HepG2 (cell line): ENCODE measurements at regions of chr17 and their contacts with region 1.

Region 1: GRCh38 chr17:66211047-66211799 is 18.0 kb downstream of the APOH start:
- DNase-seq: no peak
- ATAC-seq: no peak
- H3K4me3 ChIP-seq: no peak overlapping the region
- H3K27ac ChIP-seq: no peak overlapping the region
- H3K4me1 ChIP-seq: peaks cover 19% of the 10 kb centered on the region
- H3K27me3 ChIP-seq: no peaks in the 10 kb centered on the region
- CTCF ChIP-seq: no peak
- EP300 ChIP-seq: no peak
- POLR2A ChIP-seq: peak; percentile 33 to 60; a peak in 2 of 4 replicates
- RAD21 ChIP-seq: no peak

Region 2: GRCh38 chr17:66222798-66223350 is 11.7 kb after region 1 on chr17:
- CTCF ChIA-PET with region 1: no interaction called
- POLR2A ChIA-PET with region 1: interaction called, 10 read pairs
- in situ Hi-C with region 1: no loop called
- intact Hi-C with region 1: no loop called
- DNase-seq: no peak
- ATAC-seq: no peak
- H3K4me3 ChIP-seq: no peak overlapping the region
- H3K27ac ChIP-seq: no peak overlapping the region
- H3K4me1 ChIP-seq: peaks cover 79% of the 10 kb centered on the region
- H3K27me3 ChIP-seq: no peaks in the 10 kb centered on the region; a peak in 1 of 5 replicates
- CTCF ChIP-seq: no peak
- EP300 ChIP-seq: no peak
- POLR2A ChIP-seq: peak in 1 of 2 experiments; percentile 40; a peak in 1 of 4 replicates
- RAD21 ChIP-seq: no peak

Region 3: GRCh38 chr17:66240630-66241029 is 29.4 kb after region 1 on chr17:
- CTCF ChIA-PET with region 1: no interaction called
- POLR2A ChIA-PET with region 1: no interaction called
- in situ Hi-C with region 1: no loop called
- intact Hi-C with region 1: no loop called
- DNase-seq: no peak
- ATAC-seq: no peak
- H3K4me3 ChIP-seq: no peak overlapping the region
- H3K27ac ChIP-seq: no peak overlapping the region
- H3K4me1 ChIP-seq: peaks cover 34% of the 10 kb centered on the region
- H3K27me3 ChIP-seq: no peaks in the 10 kb centered on the region
- CTCF ChIP-seq: no peak
- EP300 ChIP-seq: no peak
- POLR2A ChIP-seq: no peak
- RAD21 ChIP-seq: no peak

Region 4: DNA sequence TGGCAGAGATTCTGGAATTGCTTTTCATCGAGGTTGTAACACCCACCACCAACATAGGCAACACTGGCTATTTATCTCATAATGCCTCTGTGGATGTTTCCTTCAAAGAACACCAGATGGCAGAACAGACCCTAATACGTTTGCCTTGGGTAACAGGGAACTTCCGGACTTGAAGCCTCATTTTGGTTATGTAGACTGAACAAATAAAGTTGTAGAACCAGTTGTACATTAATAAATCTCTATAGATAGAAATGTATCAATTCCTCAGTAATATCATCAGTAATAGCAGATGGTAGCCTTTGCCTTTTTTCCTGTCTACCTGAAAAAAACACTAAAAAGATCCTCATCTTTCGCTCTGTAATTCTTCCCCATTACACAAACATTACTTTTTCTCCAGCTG is 43.9 kb after region 1 on chr17:
- CTCF ChIA-PET with region 1: no interaction called
- POLR2A ChIA-PET with region 1: no interaction called
- in situ Hi-C with region 1: no loop called
- intact Hi-C with region 1: no loop called
- DNase-seq: peak; percentile 87
- ATAC-seq: peak; percentile 92
- H3K4me3 ChIP-seq: no peak overlapping the region
- H3K27ac ChIP-seq: no peak overlapping the region
- H3K4me1 ChIP-seq: peaks cover 5% of the 10 kb centered on the region; the same call in 1 of the 2 replicates
- H3K27me3 ChIP-seq: no peaks in the 10 kb centered on the region
- CTCF ChIP-seq: peak; percentile 93
- EP300 ChIP-seq: no peak
- POLR2A ChIP-seq: no peak
- RAD21 ChIP-seq: peak; percentile 92

Region 5: GRCh38 chr17:66290101-66290722 is 79.0 kb after region 1 on chr17:
- CTCF ChIA-PET with region 1: no interaction called
- POLR2A ChIA-PET with region 1: no interaction called
- in situ Hi-C with region 1: no loop called
- intact Hi-C with region 1: no loop called
- DNase-seq: peak; percentile 53
- ATAC-seq: peak; percentile 90
- H3K4me3 ChIP-seq: no peak overlapping the region
- H3K27ac ChIP-seq: no peak overlapping the region
- H3K4me1 ChIP-seq: peaks cover 23% of the 10 kb centered on the region
- H3K27me3 ChIP-seq: no peaks in the 10 kb centered on the region
- CTCF ChIP-seq: peak; percentile 70
- EP300 ChIP-seq: no peak
- POLR2A ChIP-seq: no peak
- RAD21 ChIP-seq: peak; percentile 67

Region 6: GRCh38 chr17:66301797-66302741 is 90.8 kb after region 1 on chr17 and contains the start of gene PRKCA:
- CTCF ChIA-PET with region 1: no interaction called
- POLR2A ChIA-PET with region 1: no interaction called
- in situ Hi-C with region 1: no loop called
- intact Hi-C with region 1: no loop called
- DNase-seq: peak; percentile 54
- ATAC-seq: peak; percentile 60
- H3K4me3 ChIP-seq: peak within 1 kb of the TSS; percentile 88 to 95 (median 91)
- H3K27ac ChIP-seq: peak within 1 kb of the TSS; percentile 61
- H3K4me1 ChIP-seq: peaks cover 32% of the 10 kb centered on the region
- H3K27me3 ChIP-seq: no peaks in the 10 kb centered on the region
- CTCF ChIP-seq: no peak
- EP300 ChIP-seq: no peak
- POLR2A ChIP-seq: peak; percentile 91 to 97
- RAD21 ChIP-seq: no peak; the same call in 1 of the 2 replicates
- total RNA-seq, gene PRKCA: 18.5 and 24.4 TPM in 2 replicates